PC-3 (cell line): ENCODE measurements at regions of chr12 and their contacts with region 1.

Region 1: GRCh38 chr12:52213512-52214420 is 19.3 kb upstream of the KRT7 start:
- DNase-seq: peak; percentile 96
- ATAC-seq: peak; percentile 56
- H3K4me3 ChIP-seq: no peak overlapping the region
- H3K27ac ChIP-seq: peak overlapping the region; percentile 72
- H3K4me1 ChIP-seq: peaks cover 61% of the 10 kb centered on the region
- H3K27me3 ChIP-seq: no peaks in the 10 kb centered on the region
- CTCF ChIP-seq: peak; percentile 99

Region 2: DNA sequence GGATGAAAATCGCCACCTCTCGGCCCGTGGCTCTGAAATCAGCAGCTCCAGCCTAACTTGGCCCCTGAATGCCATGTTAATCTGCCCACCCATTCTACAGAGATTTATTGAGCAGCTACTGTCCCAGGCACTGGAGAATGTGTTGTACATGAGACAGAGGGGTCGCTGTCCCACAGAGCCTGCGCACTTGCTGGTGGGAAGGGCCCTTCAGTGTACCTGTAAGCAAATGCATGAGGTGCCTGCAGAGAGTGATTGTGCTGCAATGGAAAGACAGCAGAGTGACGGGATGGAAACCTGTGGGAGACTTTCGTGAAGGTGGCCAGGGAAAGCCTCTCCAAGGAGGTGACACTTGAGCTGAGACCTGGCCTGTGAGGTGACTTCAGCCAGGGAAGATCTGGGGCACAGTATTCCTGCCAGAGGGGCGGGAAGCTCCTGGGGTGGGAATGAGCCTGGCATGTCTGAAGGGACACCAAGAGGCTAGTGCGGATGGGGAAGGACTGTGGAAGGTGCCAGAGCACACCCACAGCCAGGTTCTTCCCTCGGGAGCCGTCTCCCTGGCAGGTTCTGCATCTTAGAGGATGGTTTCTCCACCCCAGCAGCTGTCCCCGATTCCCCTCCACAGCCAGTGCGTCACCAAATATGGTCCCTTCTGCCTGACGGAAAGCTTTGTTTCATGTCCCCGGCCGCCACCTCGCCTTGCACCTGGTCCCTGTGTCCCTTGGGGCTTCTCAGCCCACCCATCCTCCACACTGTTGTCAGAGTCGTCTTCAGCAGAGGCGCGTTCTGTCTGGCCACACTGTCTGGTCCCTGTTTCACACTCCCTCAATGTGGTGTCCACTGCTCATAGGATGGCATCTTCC is 125.6 kb before region 1 on chr12:
- CTCF ChIA-PET with region 1: no interaction called
- POLR2A ChIA-PET with region 1: no interaction called
- intact Hi-C with region 1: no loop called
- DNase-seq: no peak
- ATAC-seq: no peak
- H3K4me3 ChIP-seq: no peak overlapping the region
- H3K27ac ChIP-seq: no peak overlapping the region
- H3K4me1 ChIP-seq: no peaks in the 10 kb centered on the region
- H3K27me3 ChIP-seq: no peaks in the 10 kb centered on the region
- CTCF ChIP-seq: no peak

Region 3: GRCh38 chr12:52121824-52122539 is 91.8 kb before region 1 on chr12:
- CTCF ChIA-PET with region 1: interaction called, 11 read pairs
- POLR2A ChIA-PET with region 1: no interaction called
- intact Hi-C with region 1: no loop called
- DNase-seq: peak; percentile 70
- ATAC-seq: peak; percentile 42
- H3K4me3 ChIP-seq: no peak overlapping the region
- H3K27ac ChIP-seq: no peak overlapping the region
- H3K4me1 ChIP-seq: peaks cover 24% of the 10 kb centered on the region
- H3K27me3 ChIP-seq: no peaks in the 10 kb centered on the region
- CTCF ChIP-seq: peak; percentile 81

Region 4: DNA sequence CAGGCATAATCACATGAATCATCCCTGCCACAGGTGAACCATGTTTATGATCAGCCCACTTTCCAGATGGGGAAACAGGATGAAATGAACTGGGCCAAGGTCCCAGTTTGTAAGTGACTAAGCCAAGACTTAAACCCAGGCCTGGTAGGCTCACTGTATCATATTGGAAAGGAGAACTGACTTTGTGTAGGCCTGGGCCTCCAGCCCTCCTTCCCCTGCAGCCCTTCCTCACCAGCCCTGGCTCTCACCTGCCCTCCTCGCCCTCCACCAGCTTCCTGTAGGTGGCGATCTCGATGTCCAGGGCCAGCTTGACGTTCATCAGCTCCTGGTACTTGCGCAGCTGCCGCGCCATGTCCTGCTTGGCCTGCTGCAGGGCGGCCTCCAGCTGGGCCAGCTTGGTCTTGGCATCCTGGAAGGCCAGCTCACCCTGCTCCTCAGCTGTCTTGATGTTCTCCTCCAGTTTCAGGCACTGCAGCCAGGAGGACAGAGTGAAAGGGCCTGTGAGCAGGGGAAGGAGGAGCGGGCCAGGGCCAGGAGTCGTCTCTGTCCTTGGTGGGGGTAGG is 41.7 kb before region 1 on chr12:
- CTCF ChIA-PET with region 1: no interaction called
- POLR2A ChIA-PET with region 1: no interaction called
- intact Hi-C with region 1: loop called (anchors 1 kb)
- DNase-seq: peak; percentile 67
- ATAC-seq: peak; percentile 52
- H3K4me3 ChIP-seq: no peak overlapping the region
- H3K27ac ChIP-seq: no peak overlapping the region
- H3K4me1 ChIP-seq: peaks cover 30% of the 10 kb centered on the region
- H3K27me3 ChIP-seq: no peaks in the 10 kb centered on the region
- CTCF ChIP-seq: peak; percentile 68